AG04450 (cell line): ENCODE measurements at regions of chr17 and their contacts with region 1.

Region 1: DNA sequence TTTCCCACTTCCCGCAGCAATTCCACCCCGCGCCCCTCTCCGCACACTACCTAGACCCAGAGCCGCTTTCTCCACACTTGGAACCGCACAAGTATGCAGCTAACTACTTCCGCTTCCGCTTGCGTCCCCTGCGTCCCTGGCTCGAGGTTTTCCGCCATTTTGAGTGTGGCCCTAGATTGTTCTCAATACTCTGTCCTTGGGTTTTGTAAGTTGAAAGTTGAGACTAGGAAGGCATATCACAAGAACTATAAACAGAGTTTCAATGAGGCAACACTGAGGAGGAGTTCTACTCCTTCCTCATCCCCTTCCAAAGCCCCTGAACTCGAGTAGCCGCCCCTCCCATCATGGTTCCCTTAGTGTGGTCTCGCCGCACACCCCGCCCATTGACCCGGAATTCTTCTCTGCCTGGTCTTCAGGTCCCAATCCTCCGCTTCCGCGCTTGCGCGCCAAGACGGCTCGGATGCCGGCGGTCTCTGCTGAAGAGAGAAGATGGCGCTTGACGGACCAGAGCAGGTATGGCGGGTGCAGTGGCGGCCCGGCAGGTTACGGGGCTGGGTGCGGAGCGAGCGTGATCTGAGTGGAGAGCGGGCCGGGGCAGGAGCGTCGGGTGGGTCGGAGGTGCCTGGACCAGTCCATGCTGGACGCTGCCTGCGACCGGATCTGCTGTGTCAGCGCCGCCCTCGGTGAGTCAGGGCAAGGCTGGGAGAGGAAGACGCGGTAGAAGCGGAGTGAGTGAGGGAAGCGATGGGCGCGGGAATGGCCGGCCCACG is at the starts of genes FTSJ3 and PSMC5:
- DNase-seq: peak; percentile 85
- H3K4me3 ChIP-seq: peak within 1 kb of the TSS; percentile 91
- H3K27ac ChIP-seq: peak within 1 kb of the TSS; percentile 83
- H3K27me3 ChIP-seq: no peaks in the 10 kb centered on the region
- CTCF ChIP-seq: peak; percentile 53
- polyA plus RNA-seq, gene FTSJ3: 54.2 and 58.4 TPM in 2 replicates
- polyA plus RNA-seq, gene PSMC5: 179 and 220 TPM in 2 replicates

Region 2: DNA sequence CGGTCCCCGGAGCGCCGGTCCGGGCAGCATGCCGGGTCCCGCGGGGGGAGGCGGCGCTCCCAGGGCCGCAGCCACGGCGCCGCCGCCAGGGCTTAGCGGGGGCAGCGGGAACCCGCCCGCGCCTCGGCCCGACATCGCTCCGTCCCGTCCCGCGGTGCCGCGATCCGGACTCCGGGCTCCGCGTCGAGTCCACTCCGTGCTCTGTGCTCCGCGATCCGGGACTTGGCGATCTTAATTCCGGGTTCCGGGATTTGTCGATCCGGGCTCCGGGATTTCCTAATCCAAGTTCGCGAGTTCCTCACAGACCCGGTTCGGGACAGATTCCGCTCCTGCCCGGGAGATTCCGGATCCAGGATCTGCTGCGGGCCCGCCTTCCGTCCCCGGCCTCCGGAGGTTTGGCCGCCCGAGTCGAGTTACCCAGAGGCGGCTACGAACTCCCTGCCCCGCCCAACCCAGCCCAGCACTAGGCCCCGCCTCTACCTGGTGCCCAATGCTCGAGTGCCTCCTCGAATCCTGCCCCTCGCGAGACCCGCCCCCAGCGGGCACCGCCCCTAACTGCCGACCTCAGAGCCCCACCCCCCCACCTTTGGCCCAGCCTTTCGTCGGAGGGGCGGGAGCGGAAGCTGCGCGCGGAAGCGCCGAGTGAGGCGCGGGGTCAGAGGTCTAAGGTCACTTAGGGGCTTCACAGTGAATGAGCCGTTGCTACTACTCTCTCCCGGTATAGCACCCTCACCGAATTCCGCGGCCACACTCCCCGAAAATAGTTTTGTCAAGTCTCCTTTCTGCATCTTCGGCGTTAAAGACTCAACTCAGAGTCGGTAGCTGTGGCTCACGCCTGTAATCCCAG is 15.6 kb after region 1 on chr17 and contains the start of gene SMARCD2:
- CTCF ChIA-PET with region 1: no interaction called
- POLR2A ChIA-PET with region 1: interaction called, 12 read pairs
- DNase-seq: peak; percentile 99
- H3K4me3 ChIP-seq: peak within 1 kb of the TSS; percentile 88
- H3K27ac ChIP-seq: peak within 1 kb of the TSS; percentile 77
- H3K27me3 ChIP-seq: no peaks in the 10 kb centered on the region
- CTCF ChIP-seq: no peak
- polyA plus RNA-seq, gene SMARCD2: 48.8 and 58.3 TPM in 2 replicates

Region 3: GRCh38 chr17:63974594-63975192 is 147.5 kb after region 1 on chr17:
- CTCF ChIA-PET with region 1: no interaction called
- POLR2A ChIA-PET with region 1: no interaction called
- DNase-seq: no peak
- H3K4me3 ChIP-seq: no peak overlapping the region
- H3K27ac ChIP-seq: no peak overlapping the region
- H3K27me3 ChIP-seq: peaks cover 7% of the 10 kb centered on the region
- CTCF ChIP-seq: no peak